Psoas muscle (tissue), 8 donors: ENCODE measurements at regions of chr1 and their contacts with region 1.

Region 1: DNA sequence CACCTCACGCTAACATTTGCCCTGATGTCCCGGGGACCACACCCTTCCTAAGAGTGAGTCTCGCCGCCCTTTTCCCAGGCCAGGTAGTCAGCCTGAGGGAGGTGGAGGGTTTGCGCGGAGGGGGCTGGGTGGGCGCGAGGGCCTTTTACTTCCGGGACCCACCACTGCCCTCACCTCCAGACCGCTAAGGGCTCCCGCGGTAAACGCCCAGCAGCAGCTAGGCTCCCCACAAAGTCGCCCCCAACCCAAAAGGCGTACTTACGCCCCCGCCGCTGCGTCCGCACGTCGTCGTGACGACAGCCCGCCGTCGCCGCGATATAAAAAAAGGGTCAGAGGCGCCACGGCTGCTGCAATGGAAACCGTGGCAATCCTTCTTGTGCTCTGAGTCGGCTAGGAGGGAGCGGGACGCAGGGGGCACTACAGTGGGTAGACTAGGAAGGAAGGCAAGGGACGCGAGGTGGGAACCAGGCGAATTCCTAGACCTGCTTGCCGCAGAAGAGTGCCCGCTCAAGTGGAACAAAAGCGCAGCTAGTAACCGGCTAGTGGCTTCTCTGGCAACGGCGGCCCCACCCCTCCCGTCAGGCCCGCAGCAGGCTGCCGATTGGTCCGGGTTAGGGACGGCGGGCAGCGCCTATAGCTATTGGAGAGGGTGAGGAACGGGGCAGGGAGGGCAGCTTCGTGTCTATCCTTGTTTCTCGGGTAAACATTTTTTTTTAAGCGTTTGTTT is at the start of gene ODF2L:
- DNase-seq: peak; percentile 88 to 93
- ATAC-seq: peak; percentile 99 to 100 (median 100)
- H3K4me3 ChIP-seq: peak within 1 kb of the TSS; percentile 93
- H3K27ac ChIP-seq: peak within 1 kb of the TSS; percentile 72
- H3K4me1 ChIP-seq: peaks cover 6% of the 10 kb centered on the region
- H3K27me3 ChIP-seq: no peaks in the 10 kb centered on the region
- CTCF ChIP-seq: no peak
- total RNA-seq, gene ODF2L: 3.8 to 5.2 (median 4.6) TPM

Region 2: DNA sequence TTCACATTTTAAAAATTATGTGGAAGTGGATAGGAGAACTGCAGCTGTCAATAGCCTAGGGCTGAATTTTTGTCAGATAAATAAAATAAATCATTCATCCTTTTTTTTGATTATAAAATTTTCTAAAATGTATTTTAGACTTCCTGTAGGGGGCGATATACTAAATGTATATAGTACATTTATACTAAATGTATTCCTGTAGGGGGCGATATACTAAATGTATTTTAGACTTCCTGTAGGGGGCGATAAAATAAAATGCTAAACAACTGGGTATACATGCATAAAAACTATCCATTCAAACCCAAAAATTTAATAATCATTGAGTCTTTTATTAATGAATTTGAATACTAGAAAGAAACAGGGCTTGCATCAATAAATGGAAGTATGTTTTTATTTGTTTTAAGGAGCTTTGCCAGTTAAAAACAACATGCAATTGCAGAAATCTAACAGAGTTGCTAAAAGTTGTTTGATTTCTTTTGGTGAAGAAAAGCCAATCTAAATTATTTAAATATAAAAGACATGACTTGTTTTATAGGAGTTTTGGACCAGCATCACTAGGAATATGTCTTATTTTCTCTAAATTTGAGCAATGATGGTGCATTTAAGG is 104.2 kb after region 1 on chr1:
- intact Hi-C with region 1: loop called in 1 of 2 experiments (anchors 5 kb)
- DNase-seq: no peak
- ATAC-seq: peak in 1 of 4 donors; percentile 64
- H3K4me3 ChIP-seq: no peak overlapping the region
- H3K27ac ChIP-seq: no peak overlapping the region
- H3K4me1 ChIP-seq: peaks cover 5% of the 10 kb centered on the region
- H3K27me3 ChIP-seq: no peaks in the 10 kb centered on the region
- CTCF ChIP-seq: peak; percentile 61

Region 3: GRCh38 chr1:86696522-86696921 is 300.6 kb after region 1 on chr1:
- intact Hi-C with region 1: loop called in 1 of 2 experiments (anchors 10 kb)
- DNase-seq: no peak
- ATAC-seq: no peak
- H3K4me3 ChIP-seq: no peak overlapping the region
- H3K27ac ChIP-seq: no peak overlapping the region
- H3K4me1 ChIP-seq: no peaks in the 10 kb centered on the region
- H3K27me3 ChIP-seq: no peaks in the 10 kb centered on the region
- CTCF ChIP-seq: no peak